ENCODE measurements at regions of chr5 and their contacts with region 1.

Region 1: DNA sequence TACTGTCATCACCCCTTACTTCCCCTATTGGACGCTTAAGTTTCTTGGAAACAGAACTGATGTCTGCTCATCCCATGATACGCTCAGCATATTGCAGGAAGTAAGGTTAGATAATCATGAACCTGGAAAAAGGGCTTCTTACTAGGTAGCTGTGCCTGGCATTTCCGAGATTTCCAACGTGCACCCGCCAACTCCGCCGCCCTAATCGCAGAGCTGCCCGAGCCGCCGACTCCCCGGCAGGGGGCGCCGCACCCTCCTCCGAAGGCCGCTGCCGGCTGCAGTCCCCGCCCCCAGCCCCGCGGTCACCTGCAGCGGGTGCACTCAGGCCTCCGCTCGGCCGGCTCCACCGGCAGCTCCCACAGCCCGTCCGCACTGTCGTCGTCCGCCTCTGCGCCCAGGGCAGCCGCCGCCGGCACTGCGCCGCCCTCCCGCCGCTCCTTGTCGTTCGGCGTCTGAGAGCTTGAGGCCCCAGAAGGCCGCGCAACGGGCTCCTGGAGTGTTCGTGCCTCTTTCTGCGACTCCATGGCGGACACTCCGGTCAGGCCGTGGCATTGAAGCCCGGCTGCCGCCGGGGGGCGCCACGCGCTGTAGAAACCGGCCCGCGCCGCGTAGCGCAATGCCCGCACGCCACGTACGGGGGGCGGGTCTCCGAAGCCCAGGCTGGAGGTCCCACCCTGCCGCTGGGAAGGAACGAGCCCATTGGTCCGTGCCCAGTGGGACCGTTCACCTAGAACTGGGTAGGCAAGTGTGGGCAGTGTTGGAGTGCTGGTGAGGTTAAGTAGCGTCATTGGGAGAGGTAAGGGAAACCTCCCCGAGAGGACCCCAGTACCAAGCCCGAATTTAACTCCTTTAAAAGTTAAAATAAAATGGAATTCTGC is at the start of gene DTWD2:
- DNase-seq: peak; percentile 93
- CTCF ChIP-seq: peak; percentile 98

Region 2: DNA sequence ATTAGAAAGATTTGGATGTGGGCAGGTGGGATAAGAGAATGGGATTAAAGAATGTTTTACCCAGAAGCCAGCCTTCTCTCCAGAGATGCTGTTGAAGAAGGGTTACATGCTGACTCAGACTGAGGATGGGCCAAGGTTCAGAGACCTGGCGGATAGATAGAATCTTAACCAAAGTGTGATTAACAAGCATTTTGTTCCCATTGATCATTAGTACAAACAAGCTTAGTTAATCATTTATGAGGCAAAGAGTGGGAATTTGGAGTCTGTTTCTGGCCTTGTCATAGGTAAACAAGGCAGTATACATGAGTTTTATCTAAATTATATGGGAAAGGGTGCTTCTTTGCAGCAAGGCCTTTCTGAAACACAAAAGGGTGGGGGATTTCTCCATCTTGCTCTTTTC is 20.9 kb after region 1 on chr5:
- CTCF ChIA-PET with region 1: interaction called, 28 read pairs
- POLR2A ChIA-PET with region 1: no interaction called
- DNase-seq: no peak
- CTCF ChIP-seq: no peak

Region 3: GRCh38 chr5:119070828-119071572 is 82.8 kb after region 1 on chr5 and contains the start of gene DMXL1:
- CTCF ChIA-PET with region 1: interaction called, 14 read pairs
- POLR2A ChIA-PET with region 1: interaction called, 3 read pairs
- DNase-seq: peak; percentile 85
- CTCF ChIP-seq: no peak

Region 4: GRCh38 chr5:119290161-119290569 is 301.9 kb after region 1 on chr5:
- CTCF ChIA-PET with region 1: interaction called, 10 read pairs
- POLR2A ChIA-PET with region 1: no interaction called
- DNase-seq: peak; percentile 29
- CTCF ChIP-seq: no peak

Region 5: GRCh38 chr5:119355685-119356611 is 367.7 kb after region 1 on chr5 and contains the start of gene TNFAIP8:
- CTCF ChIA-PET with region 1: interaction called, 12 read pairs
- POLR2A ChIA-PET with region 1: no interaction called
- DNase-seq: peak; percentile 81
- CTCF ChIP-seq: no peak

Region 6: GRCh38 chr5:119411935-119412602 is 423.8 kb after region 1 on chr5:
- CTCF ChIA-PET with region 1: interaction called, 171 read pairs
- POLR2A ChIA-PET with region 1: no interaction called
- DNase-seq: peak; percentile 45
- CTCF ChIP-seq: peak; percentile 91